ENCODE measurements at regions of chr15 and their contacts with region 1.

Region 1: GRCh38 chr15:34621675-34622074 is 38.2 kb upstream of the GOLGA8B start:
- DNase-seq: peak; percentile 14
- H3K4me3 ChIP-seq: no peak overlapping the region
- H3K27ac ChIP-seq: no peak overlapping the region
- H3K4me1 ChIP-seq: peaks cover 0 to 3% of the 10 kb centered on the region in 2 experiments; a peak in 3 of 4 replicates
- H3K27me3 ChIP-seq: no peaks in the 10 kb centered on the region
- CTCF ChIP-seq: peak; percentile 75
- EP300 ChIP-seq: no peak
- RAD21 ChIP-seq: peak; percentile 88

Region 2: DNA sequence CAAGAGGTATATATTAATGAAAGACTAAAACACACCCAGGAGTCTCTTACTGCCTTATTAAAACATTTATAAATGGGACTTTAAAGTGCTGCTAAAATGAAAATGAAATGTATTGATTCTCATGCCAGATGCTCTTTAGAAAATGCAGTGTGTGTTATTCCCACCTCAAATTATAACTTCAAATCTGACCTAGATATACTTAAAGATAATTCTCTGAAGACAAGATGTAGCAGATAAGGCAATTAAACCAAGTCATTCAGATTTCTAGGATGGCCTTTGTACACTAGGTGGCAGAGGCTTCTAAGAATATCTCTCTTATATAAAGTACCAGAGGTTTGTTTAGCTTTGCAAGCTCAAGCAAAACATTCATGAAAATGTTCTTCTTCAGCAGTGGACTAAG is 11.3 kb before region 1 on chr15:
- CTCF ChIA-PET with region 1: interaction called, 26 read pairs
- POLR2A ChIA-PET with region 1: no interaction called
- DNase-seq: no peak
- H3K4me3 ChIP-seq: no peak overlapping the region
- H3K27ac ChIP-seq: peak overlapping the region in 1 of 2 experiments; percentile 92; a peak in 2 of 4 replicates
- H3K4me1 ChIP-seq: peaks cover 4 to 30% of the 10 kb centered on the region in 2 experiments; a peak in 2 of 4 replicates
- H3K27me3 ChIP-seq: no peaks in the 10 kb centered on the region
- CTCF ChIP-seq: peak; percentile 42
- EP300 ChIP-seq: no peak
- RAD21 ChIP-seq: peak; percentile 40; the same call in 1 of the 2 replicates

Region 3: DNA sequence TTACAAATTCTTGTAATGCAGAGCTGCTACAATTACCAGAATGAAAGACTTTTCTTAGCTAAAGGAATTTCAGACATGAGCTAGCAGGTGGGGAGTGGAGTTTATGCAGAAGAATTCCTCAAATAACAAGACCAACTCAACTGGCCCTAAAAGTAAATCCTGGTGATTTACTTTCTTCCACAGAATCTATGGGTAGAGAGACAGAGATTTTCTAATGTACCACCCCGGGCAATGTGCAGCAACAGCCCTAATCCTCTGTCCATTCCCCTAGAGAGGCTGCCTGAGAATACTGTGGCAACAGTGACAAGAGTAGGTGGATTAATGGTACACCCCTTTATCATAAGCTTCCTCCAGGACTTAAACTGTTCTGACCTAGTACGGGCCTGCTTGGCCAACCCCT is 292.6 kb after region 1 on chr15:
- CTCF ChIA-PET with region 1: interaction called, 10 read pairs
- POLR2A ChIA-PET with region 1: no interaction called
- DNase-seq: no peak
- H3K4me3 ChIP-seq: no peak overlapping the region
- H3K27ac ChIP-seq: no peak overlapping the region
- H3K4me1 ChIP-seq: no peaks in the 10 kb centered on the region
- H3K27me3 ChIP-seq: no peaks in the 10 kb centered on the region
- CTCF ChIP-seq: no peak
- EP300 ChIP-seq: no peak
- RAD21 ChIP-seq: no peak

Measured in SK-N-SH (cell line).